ENCODE measurements at regions of chr5 and their contacts with region 1.

Region 1: DNA sequence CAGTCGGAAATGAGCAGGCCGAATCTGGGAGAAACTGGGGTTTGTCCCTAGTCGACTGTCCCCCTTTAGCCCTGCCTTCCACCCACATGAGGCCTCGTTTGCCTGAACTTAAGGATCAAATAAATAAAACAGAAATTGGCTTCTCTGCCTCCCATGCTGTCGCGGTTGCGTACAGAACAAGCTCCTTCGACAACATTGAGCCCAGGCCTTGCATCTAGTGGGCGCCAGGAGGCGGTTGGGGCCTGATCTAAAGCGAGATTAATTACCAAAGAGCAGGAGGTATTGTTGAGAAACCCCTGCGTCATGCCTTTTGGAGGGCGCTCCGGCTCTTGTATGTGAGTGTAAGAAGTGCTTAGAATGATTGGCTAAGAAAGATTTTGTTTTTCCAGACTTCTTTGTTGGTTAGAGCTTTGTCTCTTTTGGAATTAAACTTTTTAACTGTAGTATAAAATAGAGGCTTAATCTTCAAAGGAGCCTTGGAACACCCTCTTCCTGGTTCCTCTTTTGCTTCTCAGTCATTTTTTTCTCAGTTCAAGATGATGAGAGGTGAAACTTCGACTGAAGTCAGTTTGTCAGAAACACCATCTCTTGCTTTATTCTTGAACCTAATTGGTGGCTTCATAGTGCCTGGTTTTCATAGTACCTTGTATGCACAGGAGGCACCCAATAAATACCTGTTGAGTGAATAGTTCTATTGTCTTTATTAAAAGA is 827 bp downstream of the ATP6V0E1 start:
- DNase-seq: peak; percentile 94

Region 2: DNA sequence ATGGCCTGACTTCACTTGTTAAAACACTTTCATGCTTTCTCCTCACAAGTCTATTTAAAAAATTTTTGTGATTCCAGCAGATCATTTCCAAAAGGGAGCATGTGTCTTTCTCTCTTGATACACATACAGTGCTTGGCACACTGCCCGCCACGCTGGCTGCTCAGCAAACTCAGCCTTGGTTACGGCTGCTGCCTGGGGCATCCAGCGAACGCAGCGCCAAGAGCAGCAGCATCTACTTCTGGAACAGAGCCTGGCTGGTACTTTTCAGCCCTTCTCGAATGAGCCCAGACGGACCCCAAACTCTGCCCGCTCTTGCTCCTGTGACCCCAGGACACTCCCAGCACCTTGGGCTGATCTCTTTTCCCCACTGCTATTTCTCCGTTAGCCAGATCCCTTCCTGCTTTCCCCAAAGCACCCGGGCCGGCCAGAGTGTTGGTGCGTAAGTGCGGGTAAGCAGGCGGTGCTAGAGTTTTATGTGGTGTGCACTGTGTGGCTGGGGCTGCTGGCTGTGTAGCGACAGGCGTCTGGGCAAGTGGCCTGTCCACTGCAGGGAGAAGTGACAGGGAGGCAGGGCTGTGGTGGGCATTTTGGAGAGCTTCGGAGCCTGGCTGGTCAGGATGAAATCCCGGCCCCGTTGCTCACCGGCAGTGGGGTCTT is 603.3 kb before region 1 on chr5:
- intact Hi-C with region 1: no loop called
- DNase-seq: peak; percentile 92

Region 3: GRCh38 chr5:173057062-173057924 is 72.9 kb after region 1 on chr5:
- intact Hi-C with region 1: loop called in 1 of 2 experiments (anchors 10 kb)
- DNase-seq: peak; percentile 100

Region 4: DNA sequence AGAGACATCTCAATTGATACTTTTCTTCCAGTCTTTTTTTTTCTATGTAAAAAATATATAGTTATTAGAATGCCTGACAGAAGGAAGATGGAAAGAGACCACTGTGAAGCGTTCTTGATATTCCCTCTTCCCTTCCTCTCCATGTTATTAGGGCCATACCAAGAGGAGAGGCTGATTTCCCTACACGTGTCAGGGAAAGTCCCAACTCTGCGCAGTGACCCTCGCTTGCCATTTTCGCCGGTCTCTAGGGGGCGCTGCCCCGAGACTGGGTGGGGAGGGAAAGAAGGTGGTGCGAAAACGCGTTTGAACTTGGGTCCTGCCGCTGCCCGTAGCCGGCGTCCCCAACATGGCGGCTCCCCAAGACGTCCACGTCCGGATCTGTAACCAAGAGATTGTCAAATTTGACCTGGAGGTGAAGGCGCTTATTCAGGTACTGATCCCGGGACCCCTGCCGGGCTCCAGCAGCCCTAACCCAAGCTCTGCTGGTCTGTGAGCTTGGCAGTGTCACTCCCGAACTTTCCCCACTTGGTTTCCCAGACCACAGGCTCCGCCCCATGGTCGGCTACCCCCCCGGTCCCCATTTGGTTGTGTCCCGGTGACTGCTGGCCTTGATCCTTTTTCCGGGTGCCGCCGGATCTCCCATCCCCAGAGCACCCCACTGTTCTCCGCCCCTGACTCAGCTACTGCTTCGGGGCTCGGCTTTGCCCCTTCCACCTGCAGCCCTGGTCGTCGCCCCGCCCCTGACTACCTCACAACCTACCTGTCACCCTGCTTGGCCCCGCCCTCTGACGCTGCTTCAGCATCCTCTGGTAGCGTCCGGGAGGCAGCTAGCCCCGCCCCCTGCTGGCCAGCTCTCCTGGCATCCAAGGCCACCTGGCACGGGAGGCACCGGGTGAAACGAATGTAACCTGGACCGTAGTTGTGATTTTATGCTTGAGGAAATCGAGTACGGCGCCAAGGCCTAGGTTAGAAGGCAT is 160.1 kb after region 1 on chr5 and contains the start of gene BNIP1:
- intact Hi-C with region 1: loop called in 1 of 2 experiments (anchors 10 kb)
- DNase-seq: peak; percentile 98
- total RNA-seq, gene BNIP1: 10.6 to 11.6 TPM

Measured in posterior vena cava (tissue), 2 donors.